ENCODE measurements at regions of chr17 and their contacts with region 1.

Region 1: GRCh38 chr17:4891411-4892342 is 7.7 kb upstream of the C17orf107 start:
- DNase-seq: no peak
- H3K4me3 ChIP-seq: no peak overlapping the region
- H3K27ac ChIP-seq: no peak overlapping the region
- H3K4me1 ChIP-seq: no peaks in the 10 kb centered on the region
- H3K27me3 ChIP-seq: no peaks in the 10 kb centered on the region
- CTCF ChIP-seq: no peak

Region 2: GRCh38 chr17:4453812-4454591 is 437.7 kb before region 1 on chr17:
- CTCF ChIA-PET with region 1: no interaction called
- POLR2A ChIA-PET with region 1: no interaction called
- intact Hi-C with region 1: no loop called
- DNase-seq: no peak
- H3K4me3 ChIP-seq: no peak overlapping the region
- H3K27ac ChIP-seq: no peak overlapping the region
- H3K4me1 ChIP-seq: peaks cover 23% of the 10 kb centered on the region
- H3K27me3 ChIP-seq: no peaks in the 10 kb centered on the region
- CTCF ChIP-seq: no peak

Region 3: GRCh38 chr17:4635823-4636375 is 255.8 kb before region 1 on chr17:
- CTCF ChIA-PET with region 1: no interaction called
- POLR2A ChIA-PET with region 1: no interaction called
- intact Hi-C with region 1: loop called (anchors 5 kb)
- DNase-seq: peak in 1 of 2 experiments; percentile 26
- H3K4me3 ChIP-seq: no peak overlapping the region
- H3K27ac ChIP-seq: no peak overlapping the region
- H3K4me1 ChIP-seq: peaks cover 10% of the 10 kb centered on the region; the same call in 1 of the 2 replicates
- H3K27me3 ChIP-seq: peaks cover 5% of the 10 kb centered on the region; the same call in 1 of the 2 replicates
- CTCF ChIP-seq: no peak

Region 4: GRCh38 chr17:4872786-4873185 is 18.9 kb before region 1 on chr17:
- CTCF ChIA-PET with region 1: no interaction called
- POLR2A ChIA-PET with region 1: no interaction called
- intact Hi-C with region 1: no loop called
- DNase-seq: no peak
- H3K4me3 ChIP-seq: no peak overlapping the region
- H3K27ac ChIP-seq: no peak overlapping the region
- H3K4me1 ChIP-seq: no peaks in the 10 kb centered on the region
- H3K27me3 ChIP-seq: no peaks in the 10 kb centered on the region
- CTCF ChIP-seq: no peak

Region 5: DNA sequence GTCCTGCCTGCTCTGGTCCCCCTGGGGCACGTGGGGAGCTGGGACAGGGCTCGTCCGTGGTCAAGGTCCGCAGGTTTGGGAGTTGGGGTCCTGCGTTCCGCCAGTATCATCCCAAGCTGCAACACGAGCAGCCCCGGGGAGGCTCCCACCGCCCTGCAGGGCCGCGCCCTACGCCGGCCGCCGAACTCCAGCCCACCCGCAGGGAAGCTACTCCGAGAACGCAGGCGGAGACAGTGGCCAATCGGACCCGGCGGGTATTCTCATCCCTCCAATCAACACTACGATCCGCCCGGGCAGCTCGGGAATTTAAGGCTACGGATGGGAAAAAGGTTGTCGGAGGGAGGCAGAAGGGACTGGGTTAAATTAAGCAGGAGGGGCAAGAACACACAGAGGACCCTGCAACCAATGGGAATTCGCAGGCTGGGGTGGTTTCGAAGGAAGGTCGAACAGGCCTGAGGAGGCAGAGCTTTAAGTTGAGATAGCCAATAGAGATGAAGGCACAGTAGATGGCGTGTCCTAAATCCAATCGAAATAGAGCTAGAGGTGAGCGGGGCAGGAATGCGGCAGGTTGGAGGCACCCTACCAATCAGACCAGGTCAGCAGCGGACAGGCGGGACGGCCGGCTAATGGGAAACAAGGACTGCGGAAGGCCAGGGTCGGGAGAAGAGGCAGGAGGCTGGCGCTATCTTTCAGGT is 75.3 kb after region 1 on chr17:
- CTCF ChIA-PET with region 1: no interaction called
- POLR2A ChIA-PET with region 1: no interaction called
- intact Hi-C with region 1: no loop called
- DNase-seq: peak; percentile 99
- H3K4me3 ChIP-seq: peak overlapping the region; percentile 72
- H3K27ac ChIP-seq: peak overlapping the region; percentile 95
- H3K4me1 ChIP-seq: peaks cover 25% of the 10 kb centered on the region
- H3K27me3 ChIP-seq: no peaks in the 10 kb centered on the region
- CTCF ChIP-seq: no peak